ENCODE measurements at regions of chr6 and their contacts with region 1.

Region 1: DNA sequence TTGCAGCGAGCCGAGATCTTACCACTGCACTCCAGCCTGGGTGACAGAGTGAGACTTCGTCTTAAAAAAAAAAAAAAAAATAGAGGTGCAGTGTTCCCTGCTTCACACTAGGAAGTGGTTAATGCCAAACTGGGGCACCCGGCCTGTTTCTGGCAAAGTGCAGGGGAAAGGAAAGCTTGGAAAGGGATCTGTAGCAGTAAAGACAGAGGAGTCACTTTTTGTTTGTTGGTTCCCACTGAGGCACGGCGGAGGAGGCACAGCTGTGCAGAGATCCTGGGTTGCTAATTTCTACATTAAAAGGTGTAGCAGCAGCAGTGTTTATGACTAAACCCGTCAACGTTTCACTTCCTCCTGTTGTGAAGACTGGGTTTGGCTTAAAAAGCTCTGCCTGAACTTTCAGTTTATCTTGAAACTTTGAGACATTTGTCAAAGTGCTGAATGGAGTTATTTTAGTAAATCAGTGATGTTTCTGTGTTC is 125.6 kb downstream of the CARMIL1 start:
- DNase-seq: peak; percentile 81
- H3K4me3 Mint-ChIP-seq: no peak overlapping the region
- H3K27ac Mint-ChIP-seq: no peak overlapping the region
- H3K4me1 Mint-ChIP-seq: peaks cover 13% of the 10 kb centered on the region
- H3K27me3 Mint-ChIP-seq: no peaks in the 10 kb centered on the region

Region 2: DNA sequence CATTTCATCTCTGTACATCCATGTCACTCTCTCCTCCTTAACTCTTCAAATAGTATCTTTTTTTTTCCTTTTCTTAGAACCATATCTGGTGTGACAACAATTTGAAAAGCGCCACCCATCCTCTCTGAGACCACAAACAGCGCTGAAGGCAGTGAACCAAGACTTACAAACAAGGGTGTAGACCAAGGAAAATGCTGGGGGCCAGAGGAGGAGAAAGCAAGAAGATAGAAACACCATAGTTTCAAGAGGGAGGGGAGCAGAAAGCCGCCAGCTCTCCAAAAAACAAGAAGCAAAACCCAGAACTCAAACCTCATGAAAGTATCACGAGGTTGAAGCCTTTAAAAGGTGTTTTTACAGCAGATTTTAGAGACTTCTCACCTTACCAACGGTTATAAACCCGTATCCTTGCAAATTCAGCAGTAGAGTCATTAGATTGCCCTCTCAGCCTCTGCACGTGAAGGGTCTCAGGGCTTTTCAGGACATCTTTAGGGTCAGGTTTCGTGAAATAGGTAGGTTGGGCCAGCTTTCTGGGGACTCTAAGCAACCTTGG is 455.6 kb before region 1 on chr6:
- CTCF ChIA-PET with region 1: no interaction called
- intact Hi-C with region 1: loop called (anchors 10 kb)
- DNase-seq: peak; percentile 51
- H3K4me3 Mint-ChIP-seq: peak overlapping the region; percentile 61
- H3K27ac Mint-ChIP-seq: peak overlapping the region; percentile 89
- H3K4me1 Mint-ChIP-seq: peaks cover 63% of the 10 kb centered on the region
- H3K27me3 Mint-ChIP-seq: no peaks in the 10 kb centered on the region

Region 3: GRCh38 chr6:25369433-25370181 is 35.1 kb before region 1 on chr6:
- CTCF ChIA-PET with region 1: interaction called, 10 read pairs
- intact Hi-C with region 1: loop called (anchors 1 kb)
- DNase-seq: peak; percentile 57
- H3K4me3 Mint-ChIP-seq: peak overlapping the region; percentile 51
- H3K27ac Mint-ChIP-seq: peak overlapping the region; percentile 74
- H3K4me1 Mint-ChIP-seq: peaks cover 75% of the 10 kb centered on the region
- H3K27me3 Mint-ChIP-seq: no peaks in the 10 kb centered on the region

Region 4: DNA sequence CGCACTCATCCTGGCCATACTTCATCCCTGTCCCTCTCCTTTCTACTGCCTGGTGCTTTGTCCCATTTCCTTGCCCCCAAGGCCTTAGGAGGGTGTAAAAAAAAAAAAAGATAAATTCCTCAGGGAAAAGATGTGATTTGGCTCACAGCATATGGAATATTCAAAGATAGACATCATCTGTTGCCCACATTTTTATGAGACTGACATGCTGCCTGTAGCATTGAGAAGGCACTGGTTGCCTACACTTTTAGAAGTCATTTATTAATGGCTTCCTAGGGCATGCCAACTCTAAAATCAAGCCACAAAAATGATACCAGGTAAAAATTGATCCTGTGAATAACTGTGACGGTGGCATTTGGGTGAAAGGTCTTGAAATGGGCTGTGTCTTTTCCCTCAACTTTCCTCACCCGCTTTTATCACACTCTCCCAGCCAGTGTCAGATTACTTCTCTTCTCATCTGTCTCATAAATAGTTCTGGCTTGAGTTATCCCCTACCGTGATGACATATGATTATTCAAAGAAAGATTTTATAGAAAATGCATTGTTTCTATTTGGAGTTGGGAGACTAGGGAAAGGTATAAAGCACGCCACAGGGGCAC is 13.8 kb after region 1 on chr6:
- CTCF ChIA-PET with region 1: no interaction called
- intact Hi-C with region 1: loop called (anchors 2 kb)
- DNase-seq: no peak
- H3K4me3 Mint-ChIP-seq: no peak overlapping the region
- H3K27ac Mint-ChIP-seq: no peak overlapping the region
- H3K4me1 Mint-ChIP-seq: peaks cover 18% of the 10 kb centered on the region
- H3K27me3 Mint-ChIP-seq: no peaks in the 10 kb centered on the region

Region 5: DNA sequence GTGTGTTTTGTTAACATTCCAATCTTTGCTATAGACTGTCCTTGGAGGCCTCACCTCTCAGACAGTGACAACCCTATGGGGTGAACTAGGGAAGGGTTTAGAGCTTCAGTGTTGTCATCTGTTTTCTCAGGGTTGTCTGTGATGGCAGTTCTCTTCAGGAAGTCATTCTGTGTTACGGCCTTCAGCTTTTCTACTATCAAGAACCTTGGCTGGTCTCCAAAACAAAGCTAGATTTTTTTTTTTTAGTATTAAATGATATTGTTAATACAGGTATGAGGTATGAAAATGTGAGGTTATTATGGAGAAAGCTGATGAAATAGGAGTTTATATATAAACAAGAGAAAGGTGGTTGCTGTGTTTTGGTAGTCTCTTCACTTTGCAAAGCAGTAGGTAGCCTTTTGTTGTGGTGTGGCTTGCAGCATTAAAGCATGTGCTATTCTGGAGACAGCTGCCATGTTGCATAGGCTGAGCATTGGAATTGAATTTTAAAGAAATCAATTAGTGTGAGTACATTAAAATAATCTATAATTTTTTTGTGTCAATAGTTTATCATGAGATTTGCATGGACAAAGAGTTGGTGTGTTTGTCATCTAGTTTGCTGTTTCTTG is 37.0 kb after region 1 on chr6:
- CTCF ChIA-PET with region 1: no interaction called
- intact Hi-C with region 1: loop called (anchors 2 kb)
- DNase-seq: no peak
- H3K4me3 Mint-ChIP-seq: no peak overlapping the region
- H3K27ac Mint-ChIP-seq: peak overlapping the region; percentile 69
- H3K4me1 Mint-ChIP-seq: peaks cover 28% of the 10 kb centered on the region
- H3K27me3 Mint-ChIP-seq: no peaks in the 10 kb centered on the region

Measured in activated naive CD4-positive, alpha-beta T cell treated with anti-CD3 and anti-CD28 coated beads for 36 hours (primary cell).